BJ (cell line): ENCODE measurements at regions of chr4 and their contacts with region 1.

Region 1: DNA sequence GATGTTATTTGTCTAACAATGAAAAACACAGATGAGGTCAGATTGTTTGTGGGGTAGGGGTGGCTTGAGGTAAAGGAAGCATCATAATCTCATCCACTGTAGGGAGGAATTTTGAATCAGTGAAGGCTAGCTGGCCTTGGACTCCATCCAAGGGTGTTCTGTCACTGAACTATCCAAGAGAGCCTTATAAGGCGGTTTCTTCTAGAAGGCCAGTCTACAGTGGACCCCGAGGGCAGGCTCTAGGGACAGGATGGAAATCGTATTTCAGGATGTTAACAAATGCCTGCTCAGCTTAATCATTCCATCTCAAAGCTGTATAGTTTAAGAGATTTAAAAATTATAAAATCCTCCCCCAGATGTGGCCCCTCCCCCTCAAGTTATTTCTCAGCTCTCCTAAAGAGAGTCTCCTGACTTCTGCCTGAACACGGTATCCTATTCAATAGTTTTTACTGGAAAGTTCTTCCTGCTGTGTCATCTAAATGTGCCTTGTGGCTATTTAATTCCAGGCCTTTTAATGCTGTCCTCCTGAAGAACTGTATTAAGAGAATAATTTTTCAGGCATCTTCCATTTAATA is 8.0 kb downstream of the IGFBP7 start:
- DNase-seq: peak; percentile 74
- H3K4me3 ChIP-seq: no peak overlapping the region
- H3K27me3 ChIP-seq: no peaks in the 10 kb centered on the region
- CTCF ChIP-seq: no peak

Region 2: DNA sequence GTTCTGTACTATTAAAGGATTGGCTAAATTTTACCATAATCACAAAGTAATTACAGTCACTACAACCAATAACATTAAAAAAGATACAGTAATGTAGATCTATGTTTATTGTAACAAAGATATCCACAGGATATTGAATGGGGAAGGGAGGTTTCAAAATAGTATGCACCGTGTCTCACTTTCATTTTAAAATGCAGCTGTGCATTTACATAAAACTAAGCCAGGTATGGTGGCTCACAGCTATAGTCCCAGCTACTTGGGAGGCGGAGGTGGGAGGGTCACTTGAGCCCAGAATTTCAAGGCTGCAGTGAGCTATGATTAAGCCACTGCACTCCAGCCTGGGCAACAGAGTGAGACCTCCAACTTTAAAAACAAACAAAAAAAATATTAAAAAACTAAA is 626.2 kb before region 1 on chr4:
- CTCF ChIA-PET with region 1: no interaction called
- POLR2A ChIA-PET with region 1: no interaction called
- DNase-seq: no peak
- H3K4me3 ChIP-seq: no peak overlapping the region
- H3K27me3 ChIP-seq: no peaks in the 10 kb centered on the region
- CTCF ChIP-seq: no peak

Region 3: GRCh38 chr4:56874166-56874565 is 228.0 kb before region 1 on chr4:
- CTCF ChIA-PET with region 1: no interaction called
- POLR2A ChIA-PET with region 1: no interaction called
- DNase-seq: no peak
- H3K4me3 ChIP-seq: no peak overlapping the region
- H3K27me3 ChIP-seq: no peaks in the 10 kb centered on the region
- CTCF ChIP-seq: no peak

Region 4: DNA sequence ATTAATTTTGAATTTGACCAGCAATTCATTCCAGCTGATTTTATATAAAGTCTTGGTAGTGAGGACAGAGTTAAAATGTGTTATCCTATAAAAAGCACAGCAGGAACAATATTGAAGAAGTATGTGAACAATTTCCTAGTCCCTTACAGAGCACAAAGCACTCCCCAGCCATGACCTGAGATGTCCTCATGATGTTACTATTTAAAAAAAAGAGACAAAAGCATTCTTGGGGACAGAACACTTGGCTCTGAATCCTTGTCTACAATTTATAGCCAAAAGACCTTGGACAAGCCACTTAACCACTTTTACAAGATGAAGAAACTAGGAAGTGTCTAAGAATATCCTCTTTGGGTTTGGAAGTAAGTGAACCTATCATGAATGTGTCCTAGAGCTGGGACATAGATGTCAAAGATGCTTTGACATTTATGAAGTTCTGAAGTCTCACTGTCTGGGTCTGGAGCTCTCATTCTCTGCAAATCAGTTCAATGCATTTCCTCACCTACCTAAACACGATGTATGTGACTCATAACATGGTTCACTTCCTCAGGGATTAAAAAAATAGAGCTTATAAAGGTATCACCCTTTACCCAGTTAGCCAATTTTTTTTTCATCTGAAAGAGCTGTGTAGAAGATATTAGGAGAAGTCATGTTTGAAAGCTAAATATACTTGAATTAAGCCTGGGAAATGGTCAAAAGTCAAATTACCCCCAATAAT is 53.4 kb before region 1 on chr4:
- CTCF ChIA-PET with region 1: interaction called, 4 read pairs
- POLR2A ChIA-PET with region 1: interaction called, 16 read pairs
- DNase-seq: peak; percentile 44
- H3K4me3 ChIP-seq: no peak overlapping the region
- H3K27me3 ChIP-seq: no peaks in the 10 kb centered on the region
- CTCF ChIP-seq: no peak